Panc1 (cell line): ENCODE measurements at regions of chr1 and their contacts with region 1.

Region 1: GRCh38 chr1:204651843-204652421 is 33.6 kb downstream of the LRRN2 start:
- DNase-seq: no peak
- ATAC-seq: no peak
- H3K4me3 ChIP-seq: no peak overlapping the region
- H3K27ac ChIP-seq: no peak overlapping the region
- H3K4me1 ChIP-seq: no peaks in the 10 kb centered on the region
- H3K27me3 ChIP-seq: 0 out of 2 replicates have a peak, but pooled peaks cover 2% of the 10 kb centered on the region
- CTCF ChIP-seq: no peak

Region 2: DNA sequence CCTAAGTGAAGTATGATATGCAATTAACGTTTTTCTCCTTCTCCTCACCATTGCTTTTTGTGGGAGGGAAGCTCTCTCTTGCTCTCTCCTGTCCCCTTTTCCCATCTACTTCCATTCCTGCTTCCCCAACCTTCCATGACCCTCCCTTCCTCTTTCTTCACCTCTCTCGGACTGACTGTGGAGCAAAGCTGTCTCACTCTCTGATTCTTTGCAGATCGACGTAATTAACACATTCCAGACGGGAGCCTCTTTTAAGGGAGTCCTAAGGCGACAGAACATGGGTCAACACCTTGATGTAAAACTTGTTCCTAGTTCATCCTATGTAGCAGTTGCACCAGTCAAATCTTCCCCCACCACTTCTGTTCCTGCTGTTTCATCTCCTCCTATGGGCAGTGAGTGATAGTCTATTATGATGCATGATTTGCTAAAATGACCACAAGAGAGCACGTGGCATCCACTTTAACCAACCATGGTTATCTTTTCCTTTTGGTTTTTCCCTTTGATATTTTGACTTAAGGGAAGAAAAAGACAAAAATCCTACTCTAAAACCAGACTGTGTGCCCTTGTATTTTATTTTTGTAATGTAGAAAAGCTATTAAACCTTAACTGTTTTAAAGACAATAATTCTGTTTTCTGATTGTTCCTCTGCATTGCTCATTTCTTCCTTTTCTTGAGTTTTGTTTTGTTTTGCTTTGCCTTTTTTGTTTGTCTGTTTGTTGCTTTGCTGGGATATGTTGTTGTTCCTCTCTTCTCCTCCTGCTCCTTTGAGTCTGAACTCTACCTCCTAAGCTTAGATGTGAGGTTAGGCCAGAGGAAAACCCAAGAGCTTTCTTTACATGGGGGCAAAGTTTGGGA is 918.7 kb before region 1 on chr1:
- CTCF ChIA-PET with region 1: no interaction called
- POLR2A ChIA-PET with region 1: no interaction called
- in situ Hi-C with region 1: no loop called
- intact Hi-C with region 1: no loop called
- DNase-seq: no peak
- ATAC-seq: no peak
- H3K4me3 ChIP-seq: no peak overlapping the region
- H3K27ac ChIP-seq: no peak overlapping the region
- H3K4me1 ChIP-seq: no peaks in the 10 kb centered on the region
- H3K27me3 ChIP-seq: no peaks in the 10 kb centered on the region
- CTCF ChIP-seq: no peak

Region 3: DNA sequence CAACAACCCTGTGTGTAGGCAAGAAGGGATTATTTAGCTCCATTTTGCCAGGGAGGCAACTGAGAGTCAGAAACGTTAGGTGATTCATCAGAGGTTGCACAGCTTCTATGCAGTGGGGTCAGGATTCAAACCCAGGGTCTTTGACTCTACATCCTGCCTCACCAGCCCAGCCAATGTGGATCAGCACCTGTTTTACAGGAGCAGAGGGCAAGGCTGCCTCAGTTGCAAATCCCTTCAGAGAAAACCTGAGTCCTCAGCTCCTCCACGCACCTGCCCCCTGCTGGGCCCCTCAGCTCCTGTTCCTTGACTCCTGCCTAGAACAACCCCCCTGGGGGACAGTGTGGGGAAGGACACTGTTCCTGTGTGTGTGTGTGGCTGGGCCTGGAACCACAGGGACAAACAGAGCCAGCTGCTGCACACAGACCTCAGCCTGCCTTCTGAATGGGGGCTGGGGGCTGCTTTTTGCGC is 28.0 kb before region 1 on chr1:
- CTCF ChIA-PET with region 1: no interaction called
- POLR2A ChIA-PET with region 1: interaction called, 11 read pairs
- in situ Hi-C with region 1: no loop called
- intact Hi-C with region 1: no loop called
- DNase-seq: no peak
- ATAC-seq: peak; percentile 70
- H3K4me3 ChIP-seq: no peak overlapping the region
- H3K27ac ChIP-seq: no peak overlapping the region
- H3K4me1 ChIP-seq: peaks cover 16% of the 10 kb centered on the region
- H3K27me3 ChIP-seq: no peaks in the 10 kb centered on the region
- CTCF ChIP-seq: no peak

Region 4: DNA sequence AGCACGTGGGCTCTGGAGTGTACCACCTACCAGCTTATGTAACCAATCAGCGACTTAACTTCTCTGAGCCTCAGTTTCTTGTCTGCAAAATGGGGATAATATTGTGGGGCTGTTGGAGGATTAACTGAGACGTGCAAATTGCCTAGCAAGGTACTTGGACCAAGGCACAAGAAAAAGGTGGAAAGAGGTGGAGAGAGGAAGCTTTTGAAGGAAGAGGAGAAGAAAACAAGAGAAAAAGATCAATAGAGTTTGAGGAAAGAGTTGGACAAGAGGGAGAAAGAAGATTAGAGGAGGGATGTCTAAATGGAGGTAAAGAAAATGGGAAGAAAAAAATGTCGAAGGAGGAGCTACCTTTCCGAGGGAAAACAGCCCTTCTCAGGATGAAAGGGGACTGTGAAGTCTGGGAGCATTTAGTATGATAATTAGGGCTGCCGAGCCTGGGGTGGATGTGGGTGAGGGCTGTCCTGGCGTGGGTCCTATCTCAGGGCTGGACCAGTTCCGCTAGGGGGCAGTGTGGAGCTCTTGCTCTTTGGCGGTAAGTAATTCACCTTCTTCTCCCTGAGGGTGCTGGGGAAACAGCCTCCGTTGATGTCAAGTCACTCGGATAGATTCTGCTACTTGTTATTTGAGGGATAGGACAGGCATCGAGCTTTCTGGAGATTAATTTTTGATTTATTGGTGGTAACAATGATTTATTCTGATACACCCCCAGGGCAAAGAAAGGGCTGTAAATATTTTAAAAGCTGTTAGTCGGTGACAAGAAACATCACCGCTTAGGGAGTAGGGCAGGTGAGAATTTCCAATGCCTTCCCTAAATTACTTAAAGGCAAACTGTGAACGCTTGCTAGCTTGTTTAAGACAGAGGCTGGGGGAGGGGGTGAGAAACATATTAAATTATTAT is 139.8 kb after region 1 on chr1:
- CTCF ChIA-PET with region 1: interaction called, 15 read pairs
- POLR2A ChIA-PET with region 1: no interaction called
- in situ Hi-C with region 1: no loop called
- intact Hi-C with region 1: no loop called
- DNase-seq: peak; percentile 36
- ATAC-seq: peak; percentile 92
- H3K4me3 ChIP-seq: no peak overlapping the region
- H3K27ac ChIP-seq: no peak overlapping the region
- H3K4me1 ChIP-seq: 0 out of 2 replicates have a peak, but pooled peaks cover 4% of the 10 kb centered on the region
- H3K27me3 ChIP-seq: peaks cover 13% of the 10 kb centered on the region
- CTCF ChIP-seq: peak; percentile 95

Region 5: GRCh38 chr1:204842892-204843291 is 191.0 kb after region 1 on chr1:
- CTCF ChIA-PET with region 1: no interaction called
- POLR2A ChIA-PET with region 1: no interaction called
- in situ Hi-C with region 1: no loop called
- intact Hi-C with region 1: no loop called
- DNase-seq: no peak
- ATAC-seq: no peak
- H3K4me3 ChIP-seq: no peak overlapping the region
- H3K27ac ChIP-seq: no peak overlapping the region
- H3K4me1 ChIP-seq: no peaks in the 10 kb centered on the region
- H3K27me3 ChIP-seq: no peaks in the 10 kb centered on the region
- CTCF ChIP-seq: no peak